ENCODE measurements at regions of chr7 and their contacts with region 1.

Region 1: GRCh38 chr7:151038951-151039849 is 9.1 kb upstream of the ASIC3 start:
- DNase-seq: peak; percentile 64
- H3K4me3 ChIP-seq: no peak overlapping the region
- H3K27ac ChIP-seq: peak overlapping the region in 2 of 4 donors; percentile 18 to 35
- H3K4me1 ChIP-seq: peaks cover 0 to 13% (median 9%) of the 10 kb centered on the region in 4 donors
- H3K27me3 ChIP-seq: no peaks in the 10 kb centered on the region
- CTCF ChIP-seq: no peak
- EP300 ChIP-seq: no peak
- POLR2A ChIP-seq: no peak

Region 2: GRCh38 chr7:150787321-150788281 is 251.6 kb before region 1 on chr7:
- in situ Hi-C with region 1: no loop called
- intact Hi-C with region 1: no loop called
- DNase-seq: no peak
- H3K4me3 ChIP-seq: no peak overlapping the region
- H3K27ac ChIP-seq: peak overlapping the region; percentile 83 to 89 (median 86)
- H3K4me1 ChIP-seq: peaks cover 26 to 71% (median 49%) of the 10 kb centered on the region in 4 donors
- H3K27me3 ChIP-seq: no peaks in the 10 kb centered on the region
- CTCF ChIP-seq: no peak
- EP300 ChIP-seq: no peak
- POLR2A ChIP-seq: no peak

Region 3: GRCh38 chr7:150927956-150928344 is 111.2 kb before region 1 on chr7:
- in situ Hi-C with region 1: no loop called
- intact Hi-C with region 1: no loop called
- DNase-seq: no peak
- H3K4me3 ChIP-seq: no peak overlapping the region
- H3K27ac ChIP-seq: no peak overlapping the region
- H3K4me1 ChIP-seq: peaks cover 5 to 16% (median 13%) of the 10 kb centered on the region in 4 donors
- H3K27me3 ChIP-seq: no peaks in the 10 kb centered on the region
- CTCF ChIP-seq: no peak
- EP300 ChIP-seq: no peak
- POLR2A ChIP-seq: no peak

Region 4: DNA sequence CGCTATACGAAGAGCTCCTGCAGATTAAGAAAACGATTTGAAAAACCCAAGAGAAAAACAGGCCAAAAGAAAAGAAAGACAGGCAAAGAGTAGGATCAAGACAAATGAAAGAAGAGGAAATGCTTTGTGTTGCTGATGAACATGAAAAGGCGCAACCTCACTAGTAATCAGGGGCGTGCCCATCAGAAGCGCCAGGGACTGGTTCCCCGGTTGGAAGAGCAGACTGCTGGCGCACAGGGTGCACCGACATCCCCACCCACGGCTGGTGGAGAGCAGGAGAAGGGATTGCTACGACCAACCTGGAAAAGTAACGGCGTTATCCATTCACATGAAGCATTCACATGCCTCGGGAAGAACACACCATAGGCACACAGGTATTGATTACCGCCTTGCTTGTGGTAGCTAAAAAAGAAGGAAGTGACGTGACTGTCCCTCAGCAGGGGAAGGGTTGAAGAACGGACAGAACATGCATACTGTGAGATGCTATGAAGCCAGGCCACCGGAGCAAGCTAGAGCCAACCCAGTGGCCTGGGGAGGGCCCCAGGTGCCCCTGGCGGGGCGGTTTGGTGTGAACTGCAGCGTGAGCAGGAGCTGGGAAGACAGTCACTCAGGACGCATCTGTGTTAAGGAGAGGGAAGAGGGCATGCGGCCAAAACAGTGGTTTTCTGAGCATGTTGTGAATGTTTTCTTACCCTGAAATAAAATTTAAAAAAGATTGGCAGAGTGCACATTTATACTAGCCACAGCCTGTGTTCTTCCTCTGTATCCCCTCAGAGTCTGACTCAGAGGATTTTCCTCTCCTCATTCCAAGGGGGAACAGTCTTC is 65.4 kb after region 1 on chr7:
- in situ Hi-C with region 1: loop called in 1 of 4 experiments (anchors 10 kb)
- intact Hi-C with region 1: no loop called
- DNase-seq: no peak
- H3K4me3 ChIP-seq: no peak overlapping the region
- H3K27ac ChIP-seq: no peak overlapping the region
- H3K4me1 ChIP-seq: peaks cover 0 to 11% (median 4%) of the 10 kb centered on the region in 4 donors
- H3K27me3 ChIP-seq: no peaks in the 10 kb centered on the region
- CTCF ChIP-seq: no peak
- EP300 ChIP-seq: no peak
- POLR2A ChIP-seq: no peak